A673 (cell line): ENCODE measurements at regions of chr17 and their contacts with region 1.

Region 1: DNA sequence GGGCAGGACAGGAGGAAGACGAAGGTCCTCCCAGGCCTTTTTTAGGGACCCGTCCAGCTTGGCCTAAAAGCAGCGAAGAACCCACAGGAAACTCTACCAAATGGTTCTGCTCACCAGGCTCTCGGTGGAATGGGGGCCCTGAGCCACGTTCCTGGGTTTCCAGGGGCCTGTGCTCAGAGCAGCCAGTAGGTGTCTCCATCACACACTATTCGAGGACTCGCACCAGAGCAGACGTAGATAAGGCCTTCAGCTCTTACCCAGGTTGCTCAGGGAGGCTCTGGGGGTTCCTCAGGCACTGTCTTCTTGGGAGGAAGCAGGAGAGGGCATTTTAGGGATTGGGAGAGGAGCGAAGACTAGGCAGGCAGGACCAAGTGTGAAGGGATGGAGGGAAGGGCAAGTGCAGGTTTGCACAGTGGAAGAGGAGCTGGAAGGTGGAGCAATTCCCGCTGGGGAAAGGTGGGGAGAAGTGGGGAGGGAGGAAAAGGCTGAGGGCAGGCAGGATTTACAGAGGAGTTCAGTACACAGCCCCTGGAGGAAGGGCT is 157.1 kb downstream of the RGS9 start:
- DNase-seq: peak; percentile 84
- H3K4me3 ChIP-seq: no peak overlapping the region
- H3K27ac ChIP-seq: no peak overlapping the region
- H3K4me1 ChIP-seq: peaks cover 8% of the 10 kb centered on the region
- H3K27me3 ChIP-seq: no peaks in the 10 kb centered on the region
- CTCF ChIP-seq: peak; percentile 91

Region 2: GRCh38 chr17:65413390-65413789 is 119.1 kb after region 1 on chr17:
- CTCF ChIA-PET with region 1: interaction called, 11 read pairs
- POLR2A ChIA-PET with region 1: no interaction called
- intact Hi-C with region 1: no loop called
- DNase-seq: no peak
- H3K4me3 ChIP-seq: no peak overlapping the region
- H3K27ac ChIP-seq: no peak overlapping the region
- H3K4me1 ChIP-seq: no peaks in the 10 kb centered on the region
- H3K27me3 ChIP-seq: no peaks in the 10 kb centered on the region
- CTCF ChIP-seq: no peak

Region 3: GRCh38 chr17:65556014-65556909 is 262.0 kb after region 1 on chr17:
- CTCF ChIA-PET with region 1: interaction called, 9 read pairs
- POLR2A ChIA-PET with region 1: no interaction called
- intact Hi-C with region 1: loop called (anchors 1 kb)
- DNase-seq: peak; percentile 83
- H3K4me3 ChIP-seq: no peak overlapping the region
- H3K27ac ChIP-seq: no peak overlapping the region
- H3K4me1 ChIP-seq: peaks cover 15% of the 10 kb centered on the region
- H3K27me3 ChIP-seq: no peaks in the 10 kb centered on the region
- CTCF ChIP-seq: peak; percentile 92

Region 4: GRCh38 chr17:65794572-65794971 is 500.3 kb after region 1 on chr17:
- CTCF ChIA-PET with region 1: no interaction called
- POLR2A ChIA-PET with region 1: no interaction called
- intact Hi-C with region 1: loop called (anchors 10 kb)
- DNase-seq: peak; percentile 52
- H3K4me3 ChIP-seq: no peak overlapping the region
- H3K27ac ChIP-seq: no peak overlapping the region
- H3K4me1 ChIP-seq: no peaks in the 10 kb centered on the region
- H3K27me3 ChIP-seq: no peaks in the 10 kb centered on the region
- CTCF ChIP-seq: peak; percentile 61

Region 5: DNA sequence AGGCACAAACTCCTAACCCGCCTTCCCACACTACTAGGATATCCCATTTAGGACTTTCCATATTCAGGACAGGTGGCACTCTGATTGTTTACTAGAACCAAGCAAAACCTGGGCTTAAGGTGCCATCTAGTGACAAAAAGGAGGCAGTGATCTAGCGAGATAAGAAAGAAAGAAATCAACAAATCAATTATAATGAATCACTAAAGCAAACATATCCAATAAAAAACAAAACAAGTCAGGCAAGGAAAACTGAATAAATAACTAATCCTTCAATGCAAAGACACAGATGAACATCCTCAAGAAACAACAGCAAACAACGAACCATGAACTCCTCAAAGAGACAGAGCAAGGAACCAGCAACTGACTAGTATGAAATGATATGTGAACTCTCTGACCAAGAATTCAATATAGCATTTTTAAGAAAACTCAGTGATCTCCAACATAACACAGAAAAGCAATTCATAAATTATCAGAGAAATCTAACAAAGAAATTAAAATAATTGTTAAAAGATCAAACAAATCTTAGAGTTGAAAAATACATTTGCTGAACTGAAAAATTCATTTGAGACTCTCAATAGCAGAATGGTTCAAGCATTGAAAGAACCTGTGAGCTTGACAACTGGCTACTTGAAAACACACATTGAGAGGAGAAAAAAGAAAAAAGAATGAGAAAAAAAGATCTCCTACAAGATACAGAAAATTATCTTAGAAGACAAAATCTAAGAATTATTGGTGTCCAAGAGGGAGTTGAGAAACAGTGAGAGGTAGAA is 694.0 kb after region 1 on chr17:
- CTCF ChIA-PET with region 1: no interaction called
- POLR2A ChIA-PET with region 1: no interaction called
- intact Hi-C with region 1: loop called (anchors 5 kb)
- DNase-seq: peak; percentile 49
- H3K4me3 ChIP-seq: no peak overlapping the region
- H3K27ac ChIP-seq: no peak overlapping the region
- H3K4me1 ChIP-seq: no peaks in the 10 kb centered on the region
- H3K27me3 ChIP-seq: no peaks in the 10 kb centered on the region
- CTCF ChIP-seq: peak; percentile 64

Region 6: DNA sequence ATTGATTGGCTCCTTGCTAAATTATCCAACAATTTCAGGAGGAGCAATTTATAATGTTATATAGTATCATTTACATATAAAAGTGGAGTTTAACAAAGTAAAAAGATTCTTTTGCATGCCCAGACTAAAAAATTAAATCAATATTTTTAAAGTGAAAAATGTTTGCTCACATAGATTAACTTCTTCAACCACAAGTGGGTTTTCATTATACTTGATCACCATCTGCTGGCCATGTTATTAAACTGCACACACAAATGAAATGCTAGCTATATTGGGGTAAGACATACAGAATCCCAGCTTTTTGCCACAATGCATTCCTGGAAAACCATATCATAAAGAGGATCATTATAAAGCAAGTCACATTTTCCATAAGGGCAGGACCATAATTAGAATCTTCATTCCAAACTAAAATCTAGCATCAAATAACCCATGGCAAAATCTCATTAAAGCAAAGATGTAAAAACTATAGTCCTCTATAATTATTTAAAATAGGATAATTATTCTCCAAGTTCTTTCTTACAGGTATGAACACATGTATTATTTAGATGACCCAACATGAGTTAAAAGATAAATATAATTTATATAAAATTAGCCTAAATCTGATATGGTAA is 871.4 kb after region 1 on chr17:
- CTCF ChIA-PET with region 1: interaction called, 8 read pairs
- POLR2A ChIA-PET with region 1: no interaction called
- intact Hi-C with region 1: loop called (anchors 2 kb)
- DNase-seq: peak; percentile 72
- H3K4me3 ChIP-seq: no peak overlapping the region
- H3K27ac ChIP-seq: no peak overlapping the region
- H3K4me1 ChIP-seq: no peaks in the 10 kb centered on the region
- H3K27me3 ChIP-seq: no peaks in the 10 kb centered on the region
- CTCF ChIP-seq: peak; percentile 76